Activated CD4-positive, alpha-beta memory T cell treated with anti-CD3 and anti-CD28 coated beads, Interleukin-2, amount 10 ng/mL, durations not matched to agents 7 days and 5 days (primary cell): ENCODE measurements at regions of chr5 and their contacts with region 1.

Region 1: DNA sequence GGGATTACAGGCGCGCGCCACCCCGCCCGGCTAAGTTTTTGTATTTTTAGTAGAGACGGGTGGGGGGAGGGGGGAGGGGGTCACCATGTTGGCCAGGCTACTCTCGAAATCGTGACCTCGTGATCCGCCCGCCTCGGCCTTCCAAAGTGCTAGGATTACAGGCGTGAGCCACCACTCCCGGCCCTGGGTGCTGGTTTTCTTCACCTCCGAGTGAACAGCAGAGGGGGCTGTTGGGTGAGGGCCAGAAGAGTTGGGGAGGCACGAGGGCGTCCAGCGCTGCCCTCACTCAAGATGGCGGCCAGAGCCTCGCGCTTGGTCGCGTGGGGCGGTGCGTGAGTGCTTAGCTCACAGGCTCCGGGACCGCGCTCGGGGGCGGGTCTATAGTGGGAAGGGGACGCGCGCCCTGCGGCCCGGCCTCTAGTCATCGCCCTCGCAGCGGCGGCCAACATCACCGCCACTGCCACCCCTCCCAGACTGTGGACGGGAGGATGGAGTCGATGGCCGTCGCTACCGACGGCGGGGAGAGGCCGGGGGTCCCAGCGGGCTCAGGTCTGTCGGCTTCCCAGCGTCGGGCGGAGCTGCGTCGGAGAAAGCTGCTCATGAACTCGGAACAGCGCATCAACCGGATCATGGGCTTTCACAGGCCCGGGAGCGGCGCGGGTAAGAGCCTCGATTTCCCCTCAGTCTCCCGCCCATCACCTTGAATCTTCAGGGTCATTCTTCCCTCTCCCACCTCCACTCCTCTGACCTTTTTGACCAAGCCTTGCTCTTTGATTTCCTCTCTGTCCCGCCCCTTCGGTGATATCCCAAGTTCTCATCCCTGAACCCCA is at the start of gene CAMLG:
- DNase-seq: peak; percentile 98
- H3K4me3 Mint-ChIP-seq: peak within 1 kb of the TSS; percentile 92
- H3K27ac Mint-ChIP-seq: peak within 1 kb of the TSS; percentile 84
- H3K4me1 Mint-ChIP-seq: peaks cover 34% of the 10 kb centered on the region
- H3K27me3 Mint-ChIP-seq: no peaks in the 10 kb centered on the region
- total RNA-seq, gene CAMLG: 30.5 to 31.0 TPM

Region 2: GRCh38 chr5:134493461-134494055 is 244.8 kb before region 1 on chr5:
- CTCF ChIA-PET with region 1: no interaction called
- POLR2A ChIA-PET with region 1: no interaction called
- DNase-seq: no peak
- H3K4me3 Mint-ChIP-seq: no peak overlapping the region
- H3K27ac Mint-ChIP-seq: no peak overlapping the region
- H3K4me1 Mint-ChIP-seq: no peaks in the 10 kb centered on the region
- H3K27me3 Mint-ChIP-seq: no peaks in the 10 kb centered on the region

Region 3: GRCh38 chr5:134758504-134759341 is 20.4 kb after region 1 on chr5 and contains the start of gene DDX46:
- CTCF ChIA-PET with region 1: interaction called, 80 read pairs
- POLR2A ChIA-PET with region 1: interaction called, 104 read pairs
- DNase-seq: peak; percentile 95
- H3K4me3 Mint-ChIP-seq: peak within 1 kb of the TSS; percentile 95
- H3K27ac Mint-ChIP-seq: peak within 1 kb of the TSS; percentile 88
- H3K4me1 Mint-ChIP-seq: peaks cover 38% of the 10 kb centered on the region
- H3K27me3 Mint-ChIP-seq: no peaks in the 10 kb centered on the region
- total RNA-seq, gene DDX46: 51.8 to 56.7 TPM

Region 4: DNA sequence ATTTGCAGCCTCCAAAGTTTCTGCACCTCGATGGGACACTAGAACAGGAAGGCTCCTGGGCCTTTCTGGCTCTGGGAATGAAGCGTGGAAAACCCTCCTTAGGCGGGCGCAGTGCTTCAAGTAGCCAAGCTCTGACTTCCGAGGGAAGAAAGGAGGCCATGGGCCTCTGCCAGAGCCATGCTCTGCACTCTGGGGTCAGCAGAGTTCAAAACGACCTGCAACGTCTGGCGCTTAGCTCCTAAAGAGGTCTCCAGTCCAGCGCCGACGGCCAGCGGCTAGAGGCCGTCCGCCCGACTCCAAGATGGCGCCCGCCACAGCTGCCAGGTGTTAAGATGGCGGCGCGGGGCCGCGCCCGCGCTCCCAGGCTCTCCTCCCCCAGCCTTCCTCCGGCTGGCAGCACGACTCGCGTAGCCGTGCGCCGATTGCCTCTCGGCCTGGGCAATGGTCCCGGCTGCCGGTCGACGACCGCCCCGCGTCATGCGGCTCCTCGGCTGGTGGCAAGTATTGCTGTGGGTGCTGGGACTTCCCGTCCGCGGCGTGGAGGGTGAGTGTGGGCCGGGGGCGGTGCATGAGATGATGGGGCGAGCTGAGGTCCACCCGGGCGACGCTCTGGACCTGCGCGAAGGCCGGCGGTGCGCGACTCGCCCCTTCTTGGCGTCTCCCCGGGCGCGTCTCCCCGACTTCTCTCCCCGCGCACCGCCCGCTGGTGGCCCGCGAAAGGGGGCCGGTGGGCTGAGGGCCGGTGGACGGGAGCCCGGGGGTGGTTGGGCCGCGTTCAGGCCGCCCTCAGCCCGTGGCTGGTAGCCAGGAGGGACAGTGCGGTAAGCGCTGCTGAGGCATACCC is 135.9 kb after region 1 on chr5 and contains the start of gene TXNDC15:
- CTCF ChIA-PET with region 1: interaction called, 6 read pairs
- POLR2A ChIA-PET with region 1: interaction called, 10 read pairs
- DNase-seq: peak; percentile 86
- H3K4me3 Mint-ChIP-seq: peak within 1 kb of the TSS; percentile 95
- H3K27ac Mint-ChIP-seq: peak within 1 kb of the TSS; percentile 95
- H3K4me1 Mint-ChIP-seq: peaks cover 42% of the 10 kb centered on the region
- H3K27me3 Mint-ChIP-seq: no peaks in the 10 kb centered on the region
- total RNA-seq, gene TXNDC15: 51.0 to 56.9 TPM